MCF 10A (cell line): ENCODE measurements at regions of chr13 and their contacts with region 1.

Region 1: GRCh38 chr13:101942038-101942437 is 459.8 kb downstream of the FGF14 start:
- DNase-seq: peak; percentile 65
- H3K4me3 Mint-ChIP-seq: no peak overlapping the region
- H3K27ac Mint-ChIP-seq: no peak overlapping the region
- H3K4me1 Mint-ChIP-seq: no peaks in the 10 kb centered on the region
- H3K27me3 Mint-ChIP-seq: peaks cover 40% of the 10 kb centered on the region
- CTCF ChIP-seq: peak; percentile 77

Region 2: DNA sequence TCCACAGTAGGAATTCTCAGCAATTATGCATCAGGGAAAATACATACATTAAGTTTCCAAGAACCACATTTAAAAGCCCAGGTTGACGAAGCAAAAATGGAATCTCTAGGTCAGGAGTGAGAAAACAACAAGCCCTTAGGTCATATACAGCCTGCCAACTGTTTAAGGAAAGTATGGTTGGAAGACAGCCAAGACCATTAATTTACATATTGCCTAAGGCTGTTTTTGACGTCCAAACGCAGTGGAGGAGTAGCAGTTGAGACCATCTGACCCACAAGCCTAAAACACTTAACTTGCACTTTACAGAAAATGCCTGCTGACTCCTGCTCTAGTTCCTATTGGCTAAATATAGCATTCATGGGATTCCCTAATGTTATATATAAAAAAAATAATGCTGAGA is 190.6 kb before region 1 on chr13:
- CTCF ChIA-PET with region 1: no interaction called
- POLR2A ChIA-PET with region 1: no interaction called
- intact Hi-C with region 1: no loop called
- DNase-seq: peak; percentile 93
- H3K4me3 Mint-ChIP-seq: no peak overlapping the region
- H3K27ac Mint-ChIP-seq: peak overlapping the region; percentile 46
- H3K4me1 Mint-ChIP-seq: peaks cover 14% of the 10 kb centered on the region
- H3K27me3 Mint-ChIP-seq: no peaks in the 10 kb centered on the region
- CTCF ChIP-seq: no peak

Region 3: DNA sequence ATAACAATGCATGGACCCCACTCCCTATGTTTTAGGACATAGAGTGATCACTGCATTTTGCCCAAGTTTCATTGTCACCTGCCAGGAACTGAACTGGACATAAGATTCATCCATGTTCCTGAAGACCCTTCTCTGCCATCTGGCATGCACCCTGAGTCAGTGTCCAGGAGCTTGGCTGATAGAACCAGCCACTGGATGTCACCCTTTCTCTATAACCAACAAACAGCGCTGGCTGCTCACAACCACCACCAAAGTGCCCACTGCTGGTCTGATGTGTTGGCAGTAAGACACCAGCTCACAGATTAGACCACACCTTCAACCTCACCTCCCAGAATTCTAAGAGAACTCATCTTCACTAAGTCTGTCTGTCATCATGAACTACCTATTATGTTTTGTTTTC is 156.2 kb before region 1 on chr13:
- CTCF ChIA-PET with region 1: no interaction called
- POLR2A ChIA-PET with region 1: no interaction called
- intact Hi-C with region 1: loop called (anchors 1 kb)
- DNase-seq: peak; percentile 54
- H3K4me3 Mint-ChIP-seq: no peak overlapping the region
- H3K27ac Mint-ChIP-seq: no peak overlapping the region
- H3K4me1 Mint-ChIP-seq: no peaks in the 10 kb centered on the region
- H3K27me3 Mint-ChIP-seq: peaks cover 95% of the 10 kb centered on the region
- CTCF ChIP-seq: peak; percentile 35

Region 4: DNA sequence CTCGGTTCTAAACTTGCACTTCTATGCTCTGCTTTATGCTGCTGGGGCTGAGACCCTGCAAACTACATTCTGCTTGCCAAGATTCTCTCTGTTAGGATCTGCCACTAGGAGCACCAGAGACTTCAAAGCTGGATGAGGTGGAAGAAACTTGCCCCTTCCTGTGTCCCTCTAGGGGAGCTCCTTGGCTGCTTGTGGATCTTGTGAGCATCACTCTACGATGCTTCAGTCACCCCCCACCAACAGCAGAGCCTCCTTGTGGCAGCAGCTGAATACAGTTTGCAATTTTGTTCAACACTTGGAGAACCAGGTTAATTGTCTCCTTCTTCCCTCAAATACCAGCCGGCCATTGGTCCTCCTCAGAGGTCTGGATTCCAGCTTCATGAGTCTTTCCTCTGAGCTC is 149.2 kb after region 1 on chr13:
- CTCF ChIA-PET with region 1: interaction called, 5 read pairs
- POLR2A ChIA-PET with region 1: no interaction called
- intact Hi-C with region 1: loop called (anchors 2 kb)
- DNase-seq: peak; percentile 18
- H3K4me3 Mint-ChIP-seq: no peak overlapping the region
- H3K27ac Mint-ChIP-seq: no peak overlapping the region
- H3K4me1 Mint-ChIP-seq: peaks cover 8% of the 10 kb centered on the region
- H3K27me3 Mint-ChIP-seq: no peaks in the 10 kb centered on the region
- CTCF ChIP-seq: no peak

Region 5: DNA sequence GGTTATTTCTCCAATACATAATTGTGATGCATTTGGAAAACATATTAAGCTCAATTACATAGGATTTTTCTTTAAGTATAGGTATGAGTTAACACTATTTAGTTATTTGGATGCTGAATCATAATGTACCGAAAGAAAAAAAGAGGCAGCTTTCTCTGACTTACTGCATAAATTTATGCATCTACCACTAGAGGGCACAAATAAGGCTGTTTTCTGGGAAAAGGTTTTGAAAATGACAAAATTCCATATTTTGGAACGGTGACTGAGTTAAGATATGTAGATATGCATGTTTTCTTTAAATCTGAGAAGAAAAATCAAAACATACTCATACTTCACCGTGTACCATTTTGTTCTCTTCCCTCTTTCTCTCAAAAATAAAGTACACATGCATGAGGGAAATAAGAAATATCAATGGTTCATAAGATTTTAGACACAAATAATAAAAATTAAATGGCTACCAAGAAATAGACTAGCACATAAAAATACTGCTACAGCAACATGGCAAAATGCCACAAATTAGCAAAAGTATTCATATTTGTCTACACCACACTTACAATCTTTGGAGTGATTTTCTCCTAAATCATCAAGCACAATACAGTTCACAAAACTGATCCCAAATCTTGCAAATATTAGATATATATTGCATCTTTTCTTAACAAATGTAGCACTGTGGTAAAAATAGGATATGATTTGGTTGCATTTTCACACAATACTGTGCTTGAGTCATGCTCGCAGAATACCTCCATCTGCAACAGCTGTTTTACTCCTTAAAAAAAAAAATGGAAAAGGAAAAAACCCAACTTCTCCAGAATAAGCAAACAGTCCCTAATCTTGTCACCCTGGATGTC is 199.8 kb after region 1 on chr13:
- CTCF ChIA-PET with region 1: interaction called, 4 read pairs
- POLR2A ChIA-PET with region 1: no interaction called
- intact Hi-C with region 1: loop called (anchors 5 kb)
- DNase-seq: peak; percentile 31
- H3K4me3 Mint-ChIP-seq: no peak overlapping the region
- H3K27ac Mint-ChIP-seq: no peak overlapping the region
- H3K4me1 Mint-ChIP-seq: no peaks in the 10 kb centered on the region
- H3K27me3 Mint-ChIP-seq: no peaks in the 10 kb centered on the region
- CTCF ChIP-seq: peak; percentile 78

Region 6: GRCh38 chr13:102197193-102197592 is 255.2 kb after region 1 on chr13:
- CTCF ChIA-PET with region 1: no interaction called
- POLR2A ChIA-PET with region 1: no interaction called
- intact Hi-C with region 1: loop called (anchors 1 kb)
- DNase-seq: peak; percentile 57
- H3K4me3 Mint-ChIP-seq: no peak overlapping the region
- H3K27ac Mint-ChIP-seq: no peak overlapping the region
- H3K4me1 Mint-ChIP-seq: peaks cover 37% of the 10 kb centered on the region
- H3K27me3 Mint-ChIP-seq: no peaks in the 10 kb centered on the region
- CTCF ChIP-seq: peak; percentile 37

Region 7: DNA sequence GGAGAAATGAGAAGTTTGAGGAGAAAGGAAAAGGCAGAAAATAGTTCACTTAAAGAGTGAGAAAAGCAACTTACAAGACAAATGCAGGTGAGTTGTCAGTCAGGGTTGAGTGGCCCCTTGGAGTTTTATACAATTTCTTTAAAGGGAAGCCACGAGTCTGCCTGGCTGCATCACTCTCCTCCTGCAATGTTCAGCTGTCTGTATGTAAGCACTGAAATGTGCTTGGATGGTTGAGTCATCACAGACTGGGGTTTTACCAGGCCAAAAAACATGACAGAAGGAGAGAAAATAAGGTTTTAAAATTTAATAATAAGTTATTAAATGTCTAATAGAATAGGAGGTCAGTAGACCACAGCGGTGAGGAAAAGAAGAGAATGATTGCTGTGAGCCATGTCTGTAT is 510.8 kb after region 1 on chr13:
- CTCF ChIA-PET with region 1: interaction called, 11 read pairs
- POLR2A ChIA-PET with region 1: no interaction called
- intact Hi-C with region 1: loop called (anchors 1 kb)
- DNase-seq: no peak
- H3K4me3 Mint-ChIP-seq: no peak overlapping the region
- H3K27ac Mint-ChIP-seq: no peak overlapping the region
- H3K4me1 Mint-ChIP-seq: peaks cover 13% of the 10 kb centered on the region
- H3K27me3 Mint-ChIP-seq: no peaks in the 10 kb centered on the region
- CTCF ChIP-seq: no peak

Region 8: DNA sequence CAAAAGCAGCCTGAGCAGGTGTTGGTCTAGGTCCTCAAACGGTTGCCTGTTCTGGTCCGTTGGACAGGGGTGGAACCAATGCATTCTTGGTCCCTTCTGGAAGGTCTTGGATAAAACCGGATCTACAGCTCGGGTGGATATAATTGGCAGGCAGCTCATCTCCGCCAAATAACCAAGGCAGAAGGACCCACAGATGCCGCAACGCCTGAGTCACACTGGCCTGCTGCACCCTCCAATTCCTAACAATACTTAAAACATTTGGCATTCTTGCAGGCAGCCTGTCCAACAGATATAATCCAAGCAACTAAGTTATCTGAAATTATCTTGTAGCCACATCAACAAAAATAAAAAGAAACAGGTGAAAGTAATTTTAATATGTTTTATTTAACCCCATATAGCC is 518.8 kb after region 1 on chr13:
- CTCF ChIA-PET with region 1: interaction called, 12 read pairs
- POLR2A ChIA-PET with region 1: no interaction called
- intact Hi-C with region 1: loop called (anchors 1 kb)
- DNase-seq: peak; percentile 49
- H3K4me3 Mint-ChIP-seq: no peak overlapping the region
- H3K27ac Mint-ChIP-seq: no peak overlapping the region
- H3K4me1 Mint-ChIP-seq: peaks cover 7% of the 10 kb centered on the region
- H3K27me3 Mint-ChIP-seq: no peaks in the 10 kb centered on the region
- CTCF ChIP-seq: no peak